BJ (cell line): ENCODE measurements at regions of chr12 and their contacts with region 1.

Region 1: DNA sequence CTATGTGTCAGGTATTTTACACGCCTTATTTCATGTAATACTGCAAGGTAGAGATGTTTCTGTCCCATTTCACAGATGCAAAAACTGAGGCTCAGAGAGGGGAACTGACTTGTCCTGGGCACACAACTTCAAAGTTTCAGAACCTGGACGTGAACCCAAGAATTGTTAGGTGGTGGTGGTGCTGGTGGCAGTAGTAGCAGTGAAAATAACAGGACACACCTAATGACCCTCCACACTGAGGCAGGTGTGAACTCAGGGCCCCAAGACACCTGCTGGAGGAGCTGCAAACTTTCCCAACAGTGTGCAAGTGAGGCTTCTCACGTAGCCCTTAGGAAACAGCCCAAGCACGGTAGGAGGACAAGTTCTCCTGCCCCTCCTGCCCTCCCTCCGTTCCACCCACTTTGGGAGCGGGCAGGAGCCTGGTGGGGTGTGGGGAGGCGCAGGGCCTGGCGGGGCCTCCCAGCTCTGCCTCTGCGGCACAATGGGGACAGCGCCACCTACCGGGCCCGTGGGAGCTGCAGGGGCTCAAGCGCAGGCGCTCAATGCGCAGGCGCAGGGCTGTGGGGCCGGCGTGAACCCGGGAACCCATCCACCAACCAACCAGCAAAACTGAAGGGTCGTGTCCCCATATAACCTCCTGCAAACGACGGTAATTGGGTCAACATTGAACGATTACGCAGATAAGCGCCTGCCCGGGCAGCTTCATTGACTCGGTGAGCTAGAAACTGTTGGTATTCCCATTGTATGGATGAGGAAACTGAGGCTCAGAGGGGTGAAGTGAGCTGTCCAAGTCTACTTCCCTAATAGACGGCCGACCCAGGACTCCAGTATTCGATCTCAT is 12.0 kb upstream of the TRPV4 start:
- DNase-seq: no peak
- H3K4me3 ChIP-seq: peak overlapping the region; percentile 32
- H3K27me3 ChIP-seq: no peaks in the 10 kb centered on the region
- CTCF ChIP-seq: peak; percentile 100

Region 2: GRCh38 chr12:109504068-109504467 is 341.1 kb before region 1 on chr12:
- CTCF ChIA-PET with region 1: no interaction called
- POLR2A ChIA-PET with region 1: no interaction called
- DNase-seq: no peak
- H3K4me3 ChIP-seq: no peak overlapping the region
- H3K27me3 ChIP-seq: no peaks in the 10 kb centered on the region
- CTCF ChIP-seq: no peak

Region 3: DNA sequence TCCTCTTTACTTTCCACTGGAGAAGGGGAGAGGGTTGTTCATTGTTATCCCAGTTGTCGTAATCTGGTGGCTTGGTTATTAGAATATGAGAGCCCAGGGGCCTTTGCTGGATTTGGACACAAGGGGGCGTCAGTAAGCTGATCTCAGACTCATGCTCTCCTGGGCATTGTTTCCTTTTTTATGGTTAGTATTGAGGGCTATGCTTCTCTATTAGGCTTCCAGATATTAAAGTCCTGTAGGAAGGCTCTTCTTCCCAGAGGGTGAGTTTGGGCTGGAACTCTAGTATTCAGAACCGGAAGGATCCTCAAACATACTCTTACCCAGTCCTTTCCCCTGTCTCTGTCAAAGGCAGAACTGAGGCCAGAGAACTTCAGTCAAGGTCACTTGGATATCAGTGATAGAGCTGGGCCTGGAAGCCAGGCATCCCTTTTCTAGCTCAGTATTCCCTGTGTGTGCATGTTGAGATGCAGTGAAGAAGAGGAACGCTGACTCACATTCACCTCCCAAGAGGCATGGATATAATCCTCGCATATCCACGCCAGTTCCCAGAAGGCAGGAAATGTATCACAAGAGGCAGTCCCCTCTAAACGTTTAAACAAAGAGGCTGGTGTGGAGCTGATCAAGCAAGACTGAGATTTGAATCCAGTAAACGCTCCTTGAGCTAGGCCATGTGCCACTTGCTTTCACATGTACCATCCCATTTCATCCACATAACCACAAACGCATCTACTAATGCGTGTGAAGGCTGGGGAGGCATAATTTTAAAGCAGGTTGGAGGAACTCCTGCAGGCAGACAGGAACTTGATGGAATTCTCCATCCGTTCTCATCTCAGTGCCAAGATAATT is 326.2 kb before region 1 on chr12:
- CTCF ChIA-PET with region 1: interaction called, 10 read pairs
- POLR2A ChIA-PET with region 1: no interaction called
- DNase-seq: peak; percentile 26
- H3K4me3 ChIP-seq: no peak overlapping the region
- H3K27me3 ChIP-seq: no peaks in the 10 kb centered on the region
- CTCF ChIP-seq: peak; percentile 89

Region 4: GRCh38 chr12:109625131-109625559 is 220.1 kb before region 1 on chr12:
- CTCF ChIA-PET with region 1: no interaction called
- POLR2A ChIA-PET with region 1: no interaction called
- DNase-seq: no peak
- H3K4me3 ChIP-seq: no peak overlapping the region
- H3K27me3 ChIP-seq: peaks cover 12% of the 10 kb centered on the region
- CTCF ChIP-seq: peak; percentile 35; the same call in 1 of the 2 replicates

Region 5: DNA sequence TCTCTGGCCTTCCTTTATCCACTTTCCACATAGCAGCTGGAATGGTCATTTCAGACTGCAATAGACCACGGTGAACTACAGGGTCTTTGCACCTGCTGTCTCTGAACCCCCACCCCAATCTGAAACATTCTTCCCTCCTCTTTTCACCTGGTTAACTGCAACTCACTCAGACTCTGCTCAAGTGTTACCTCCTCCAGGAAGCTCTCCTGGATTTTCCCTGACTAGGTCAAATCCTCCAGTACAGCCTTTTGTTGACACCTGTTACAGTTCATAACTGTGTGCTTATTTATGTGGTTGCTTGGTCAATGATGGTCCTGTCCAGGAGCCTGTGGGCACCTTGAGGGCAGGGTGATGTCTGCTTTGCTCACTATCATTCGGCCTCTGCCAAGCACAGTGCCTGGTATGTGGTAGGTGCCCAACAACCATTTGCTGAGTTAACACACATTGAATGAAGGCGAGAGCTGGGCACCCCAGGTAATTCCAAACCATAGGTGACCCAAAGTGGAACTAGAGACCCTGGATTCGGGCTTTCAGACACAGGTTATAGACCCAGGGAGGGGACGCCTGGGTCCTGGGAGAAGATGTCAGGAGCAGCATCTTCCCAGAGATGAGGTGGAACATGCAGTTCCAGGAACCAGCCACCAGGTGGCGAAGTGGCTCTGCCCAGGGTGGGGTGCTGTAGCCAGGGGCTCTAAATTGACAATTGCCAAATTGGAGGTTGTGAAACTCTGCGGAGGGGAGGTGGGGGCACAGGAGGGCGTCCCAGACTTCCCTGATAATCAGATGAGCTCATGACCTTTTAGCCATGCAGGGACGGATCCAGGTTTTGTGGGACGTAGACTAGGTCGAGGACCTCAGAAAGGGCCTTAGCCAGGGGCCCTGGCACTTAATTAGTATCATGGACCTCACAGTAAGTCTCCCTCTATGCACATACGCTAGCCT is 40.1 kb before region 1 on chr12:
- CTCF ChIA-PET with region 1: interaction called, 174 read pairs
- POLR2A ChIA-PET with region 1: no interaction called
- DNase-seq: no peak
- H3K4me3 ChIP-seq: no peak overlapping the region
- H3K27me3 ChIP-seq: no peaks in the 10 kb centered on the region
- CTCF ChIP-seq: peak; percentile 98

Region 6: DNA sequence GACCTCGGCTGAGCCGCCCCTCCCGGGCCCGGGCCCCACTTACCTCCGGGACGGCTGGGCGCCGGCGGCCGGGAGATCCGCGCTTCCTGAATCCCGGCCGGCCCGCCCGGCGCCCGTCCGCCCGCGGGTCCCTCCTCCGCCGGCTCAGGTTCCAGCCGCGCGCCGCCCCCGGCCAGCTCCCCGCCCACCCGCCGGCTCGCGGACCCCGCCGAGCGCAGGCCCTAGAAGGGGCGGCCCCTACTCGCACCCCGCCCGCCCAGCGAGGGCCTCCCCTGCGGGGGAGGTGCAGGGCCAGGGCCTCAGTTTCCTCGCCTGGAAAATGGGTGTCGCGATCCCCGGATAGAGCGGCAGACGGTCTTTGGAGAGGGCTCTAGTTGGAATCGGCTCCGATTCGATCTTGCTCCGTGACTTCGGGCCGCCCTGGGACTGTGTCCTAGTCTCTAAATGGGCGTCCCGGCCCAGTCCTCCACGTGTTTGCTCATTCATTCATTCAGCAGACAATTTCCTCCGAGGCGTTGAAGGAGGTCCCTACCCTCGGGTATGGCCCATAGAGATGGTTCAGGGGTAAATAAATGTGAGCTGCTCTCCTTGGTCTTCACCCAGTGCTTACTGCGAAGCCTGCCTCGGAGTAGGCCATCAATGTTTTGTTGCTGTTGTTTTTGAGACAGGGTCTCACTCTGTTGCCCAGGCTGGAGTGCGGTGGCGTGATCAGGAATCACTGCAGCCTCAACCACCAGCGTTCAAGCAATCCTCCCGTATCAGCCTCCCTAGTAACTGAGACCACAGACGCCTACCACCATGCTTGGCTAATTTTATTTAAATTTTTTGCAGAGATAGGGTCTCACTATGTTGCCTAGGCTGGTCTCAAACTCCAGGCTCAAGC is 11.7 kb before region 1 on chr12 and contains the start of gene TRPV4:
- CTCF ChIA-PET with region 1: interaction called, 31 read pairs
- POLR2A ChIA-PET with region 1: no interaction called
- DNase-seq: no peak
- H3K4me3 ChIP-seq: peak within 1 kb of the TSS; percentile 74
- H3K27me3 ChIP-seq: no peaks in the 10 kb centered on the region
- CTCF ChIP-seq: no peak
- polyA plus RNA-seq, gene TRPV4: 7.4 and 13.4 TPM in 2 replicates

Region 7: GRCh38 chr12:109863847-109864712 is 18.9 kb after region 1 on chr12:
- CTCF ChIA-PET with region 1: interaction called, 22 read pairs
- POLR2A ChIA-PET with region 1: interaction called, 3 read pairs
- DNase-seq: no peak
- H3K4me3 ChIP-seq: no peak overlapping the region
- H3K27me3 ChIP-seq: no peaks in the 10 kb centered on the region
- CTCF ChIP-seq: no peak

Region 8: DNA sequence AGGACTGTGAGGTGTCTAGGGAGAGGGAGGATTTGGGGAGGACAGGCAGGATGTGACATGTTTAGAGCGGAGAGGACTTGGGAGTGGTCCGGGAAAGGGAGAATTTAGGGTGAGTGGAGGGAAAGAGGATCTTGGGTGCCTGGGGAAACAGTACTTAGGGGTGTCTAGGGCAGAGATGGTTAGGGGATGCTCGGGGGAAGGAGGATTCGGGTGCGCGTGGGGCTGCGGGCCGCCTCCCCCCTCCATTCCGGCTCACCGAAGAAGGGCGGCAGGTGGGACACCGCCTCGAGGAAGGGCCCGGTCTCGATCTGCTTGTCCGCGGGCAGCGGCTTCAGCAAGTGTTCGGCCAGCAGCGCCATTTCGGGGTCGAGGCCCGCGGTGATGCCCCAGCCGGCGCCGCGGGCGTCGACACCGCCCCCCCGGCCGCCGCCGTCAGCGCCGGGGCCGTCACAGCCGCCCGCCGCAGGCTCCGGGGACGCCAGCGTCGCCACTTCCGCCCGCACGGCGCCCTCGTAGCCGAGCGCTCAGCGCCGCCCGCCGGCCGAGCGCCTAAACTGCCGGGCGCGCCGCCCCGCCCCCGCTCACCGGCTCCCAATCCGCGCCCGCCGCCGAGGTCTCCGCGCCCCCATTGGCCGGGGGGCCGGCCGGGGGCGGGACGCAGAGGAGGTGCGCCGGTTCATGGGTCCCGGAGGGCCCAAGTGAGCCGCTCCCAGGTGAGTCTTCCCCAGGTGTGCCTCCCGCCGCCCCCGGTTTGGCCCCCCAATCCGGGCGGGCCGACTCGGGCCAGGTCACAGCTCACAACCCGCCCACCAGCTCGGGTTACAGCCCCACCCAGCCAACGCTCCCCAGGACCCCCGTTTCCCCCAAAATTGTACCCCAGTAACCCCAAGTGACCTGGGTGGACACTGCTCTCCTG is 35.1 kb after region 1 on chr12 and contains the start of gene GLTP:
- CTCF ChIA-PET with region 1: interaction called, 17 read pairs
- POLR2A ChIA-PET with region 1: no interaction called
- DNase-seq: no peak
- H3K4me3 ChIP-seq: peak within 1 kb of the TSS; percentile 75
- H3K27me3 ChIP-seq: no peaks in the 10 kb centered on the region
- CTCF ChIP-seq: 0 out of 2 replicates have a peak, but pooled peaks have one; percentile 4
- polyA plus RNA-seq, gene GLTP: 33.8 and 35.1 TPM in 2 replicates